ENCODE measurements at regions of chr17 and their contacts with region 1.

Region 1: GRCh38 chr17:5249615-5250014 is 15.0 kb upstream of the SCIMP start:
- DNase-seq: peak; percentile 54 to 88 (median 58)
- H3K4me3 ChIP-seq: no peak overlapping the region
- H3K27ac ChIP-seq: no peak overlapping the region
- H3K4me1 ChIP-seq: no peaks in the 10 kb centered on the region
- H3K27me3 ChIP-seq: no peaks in the 10 kb centered on the region
- CTCF ChIP-seq: peak; percentile 56 to 80 (median 72)
- POLR2A ChIP-seq: no peak

Region 2: GRCh38 chr17:5355421-5356129 is 106.0 kb after region 1 on chr17:
- intact Hi-C with region 1: no loop called
- DNase-seq: no peak
- H3K4me3 ChIP-seq: no peak overlapping the region
- H3K27ac ChIP-seq: no peak overlapping the region
- H3K4me1 ChIP-seq: no peaks in the 10 kb centered on the region
- H3K27me3 ChIP-seq: no peaks in the 10 kb centered on the region
- CTCF ChIP-seq: no peak
- POLR2A ChIP-seq: no peak

Region 3: DNA sequence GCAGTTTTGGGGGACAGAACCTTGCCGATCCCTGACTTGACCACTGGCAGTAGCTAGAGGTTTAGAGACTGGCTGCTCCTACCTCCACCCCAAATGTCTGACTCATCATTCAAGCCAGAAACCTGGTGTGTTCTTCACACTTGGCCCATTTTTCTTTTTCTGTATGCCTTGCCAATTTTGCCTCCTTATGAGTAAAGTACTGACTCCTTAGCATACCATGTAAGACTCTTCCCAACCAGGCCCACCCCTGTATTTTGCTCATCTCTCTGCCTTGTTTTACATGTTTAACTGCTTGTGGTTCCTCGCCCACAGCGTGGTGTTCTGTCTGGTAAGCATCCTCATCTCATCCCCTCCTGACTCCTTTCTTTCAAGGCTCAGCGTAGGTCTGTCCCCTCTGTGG is 131.9 kb after region 1 on chr17:
- intact Hi-C with region 1: no loop called
- DNase-seq: no peak
- H3K4me3 ChIP-seq: no peak overlapping the region
- H3K27ac ChIP-seq: no peak overlapping the region
- H3K4me1 ChIP-seq: no peaks in the 10 kb centered on the region
- H3K27me3 ChIP-seq: no peaks in the 10 kb centered on the region
- CTCF ChIP-seq: no peak
- POLR2A ChIP-seq: no peak

Region 4: DNA sequence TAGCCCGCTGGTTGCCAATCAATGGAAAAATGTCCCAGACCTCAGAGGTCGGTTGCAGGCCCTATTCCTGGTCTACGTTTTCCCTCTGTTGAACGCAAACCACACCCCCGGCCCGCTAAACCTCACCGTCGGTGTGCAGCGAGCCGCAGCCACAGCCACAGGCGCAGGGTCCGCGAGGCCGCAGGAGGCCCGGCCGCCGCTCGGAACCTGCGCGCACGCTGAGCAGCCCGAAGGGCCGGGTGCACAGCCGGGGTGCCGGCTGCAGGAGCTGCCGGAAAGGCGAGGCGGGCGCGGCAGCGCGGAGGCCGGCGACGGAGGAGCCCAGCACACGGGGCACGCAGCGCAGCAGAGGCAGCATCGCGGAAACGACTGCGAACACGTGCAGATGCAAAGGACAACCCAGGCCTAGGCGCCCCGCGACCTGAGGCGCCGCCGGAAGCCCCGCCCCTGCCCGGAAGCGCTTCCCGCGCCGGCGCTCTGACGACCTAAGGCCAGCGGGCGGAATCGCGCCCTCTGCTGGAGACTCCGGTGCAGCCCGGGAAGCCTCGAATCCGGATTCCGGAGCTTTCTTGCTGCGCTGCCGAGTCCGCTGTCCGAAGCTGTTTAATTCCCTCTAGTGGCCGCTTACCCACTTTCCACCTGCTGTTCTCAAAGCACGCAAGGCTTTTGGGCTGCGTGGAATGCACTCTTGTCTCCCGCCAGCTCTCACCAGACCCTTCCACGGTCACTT is 189.3 kb after region 1 on chr17 and contains the start of gene C1QBP:
- intact Hi-C with region 1: loop called in 1 of 2 experiments (anchors 10 kb)
- DNase-seq: peak; percentile 89 to 97 (median 93)
- H3K4me3 ChIP-seq: peak within 1 kb of the TSS; percentile 16 to 92 (median 54)
- H3K27ac ChIP-seq: peak within 1 kb of the TSS in 4 of 5 donors; percentile 58 to 88 (median 74)
- H3K4me1 ChIP-seq: peaks cover 7 to 29% of the 10 kb centered on the region in 2 donors
- H3K27me3 ChIP-seq: no peaks in the 10 kb centered on the region
- CTCF ChIP-seq: peak; percentile 97 to 99 (median 98)
- POLR2A ChIP-seq: peak in 1 of 2 donors; percentile 63
- total RNA-seq, gene C1QBP: 157 to 283 (median 174) TPM